Right ventricle myocardium inferior (tissue), 1 donor: ENCODE measurements at regions of chr17 and their contacts with region 1.

Region 1: GRCh38 chr17:5325851-5326250 is 43.8 kb downstream of the RABEP1 start:
- DNase-seq: no peak
- ATAC-seq: no peak

Region 2: GRCh38 chr17:5297245-5297644 is 28.6 kb before region 1 on chr17:
- intact Hi-C with region 1: loop called (anchors 2 kb)
- DNase-seq: no peak
- ATAC-seq: no peak

Region 3: DNA sequence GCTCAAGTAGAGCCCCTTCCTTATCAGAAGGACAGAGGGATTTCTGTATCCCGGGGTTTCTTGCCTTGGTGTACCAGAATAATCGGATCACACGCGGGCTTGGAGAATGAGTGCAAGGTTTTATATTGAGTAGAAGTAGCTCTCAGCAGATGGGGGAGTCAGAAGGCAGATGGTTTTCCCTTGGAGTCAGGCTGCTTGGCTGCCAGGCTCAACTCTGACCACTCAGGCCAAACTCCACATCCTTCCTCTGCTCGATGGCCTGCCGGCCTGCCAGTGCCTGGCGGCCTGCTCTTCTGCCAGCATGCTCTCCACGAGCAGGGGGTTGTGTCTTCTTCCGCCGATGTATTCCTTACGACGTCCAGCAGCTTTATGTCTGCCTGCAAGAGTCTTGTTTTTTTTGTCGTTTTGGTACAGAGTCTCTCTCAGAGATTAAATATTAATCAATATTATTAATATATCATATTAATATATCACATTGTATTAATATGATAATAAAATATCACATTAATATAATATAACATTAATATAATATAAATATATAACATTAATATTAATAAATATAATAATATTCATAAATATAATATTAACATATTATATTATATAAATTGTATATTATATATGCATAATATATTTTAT is 515.1 kb after region 1 on chr17:
- intact Hi-C with region 1: no loop called
- DNase-seq: no peak
- ATAC-seq: no peak